ENCODE measurements at regions of chr12 and their contacts with region 1.

Region 1: GRCh38 chr12:49358483-49359141 is 8.7 kb upstream of the SPATS2 start:
- DNase-seq: peak; percentile 45
- H3K4me3 Mint-ChIP-seq: no peak overlapping the region
- H3K27ac Mint-ChIP-seq: no peak overlapping the region
- H3K4me1 Mint-ChIP-seq: peaks cover 22% of the 10 kb centered on the region
- H3K27me3 Mint-ChIP-seq: no peaks in the 10 kb centered on the region
- CTCF ChIP-seq: peak; percentile 64

Region 2: GRCh38 chr12:49233842-49234535 is 124.6 kb before region 1 on chr12:
- CTCF ChIA-PET with region 1: no interaction called
- intact Hi-C with region 1: no loop called
- DNase-seq: no peak
- H3K4me3 Mint-ChIP-seq: peak overlapping the region; percentile 65
- H3K27ac Mint-ChIP-seq: no peak overlapping the region
- H3K4me1 Mint-ChIP-seq: no peaks in the 10 kb centered on the region
- H3K27me3 Mint-ChIP-seq: no peaks in the 10 kb centered on the region
- CTCF ChIP-seq: no peak

Region 3: DNA sequence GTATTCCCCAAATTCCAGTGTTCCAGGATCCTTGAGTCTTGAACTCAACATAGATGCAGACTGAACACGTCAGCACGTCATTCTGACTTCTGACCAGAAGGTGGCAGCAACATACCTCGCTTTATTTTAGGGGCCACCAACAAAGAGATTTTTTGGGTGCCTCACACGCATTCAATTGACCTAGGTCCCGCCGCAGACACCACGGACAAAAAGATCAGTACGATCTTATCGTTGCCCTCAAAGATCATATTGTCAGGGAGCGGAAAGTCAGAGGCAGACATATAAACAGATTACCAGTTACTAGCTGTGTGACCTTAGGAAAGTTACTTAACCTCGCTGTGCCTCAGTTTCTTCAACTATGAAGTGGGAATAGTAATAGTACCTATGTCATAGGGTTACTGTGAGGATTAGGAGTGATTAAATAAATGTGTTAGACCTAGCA is 70.2 kb before region 1 on chr12:
- CTCF ChIA-PET with region 1: interaction called, 3 read pairs
- intact Hi-C with region 1: loop called (anchors 1 kb)
- DNase-seq: peak; percentile 53
- H3K4me3 Mint-ChIP-seq: no peak overlapping the region
- H3K27ac Mint-ChIP-seq: no peak overlapping the region
- H3K4me1 Mint-ChIP-seq: no peaks in the 10 kb centered on the region
- H3K27me3 Mint-ChIP-seq: peaks cover 59% of the 10 kb centered on the region
- CTCF ChIP-seq: peak; percentile 47

Region 4: DNA sequence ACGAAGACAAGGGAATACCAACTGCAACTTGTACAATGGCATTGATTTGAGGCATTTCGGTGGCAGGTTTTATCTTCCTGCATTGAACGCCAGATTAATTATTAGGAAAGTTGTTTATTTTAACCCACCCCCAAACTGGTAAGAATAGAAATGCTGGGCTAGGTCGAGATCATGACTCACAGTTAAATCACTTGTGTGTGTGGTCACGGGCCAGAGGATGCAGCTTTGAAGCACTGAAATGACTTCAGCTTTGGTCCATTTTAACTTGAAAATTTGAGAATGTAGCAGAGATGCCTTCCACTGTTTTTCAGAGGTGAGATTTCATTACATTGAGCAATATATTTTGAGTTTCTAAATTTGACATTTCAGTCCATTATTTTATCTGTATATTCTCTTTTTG is 156.7 kb after region 1 on chr12:
- CTCF ChIA-PET with region 1: interaction called, 67 read pairs
- intact Hi-C with region 1: loop called (anchors 1 kb)
- DNase-seq: peak; percentile 42
- H3K4me3 Mint-ChIP-seq: peak overlapping the region; percentile 41
- H3K27ac Mint-ChIP-seq: no peak overlapping the region
- H3K4me1 Mint-ChIP-seq: peaks cover 21% of the 10 kb centered on the region
- H3K27me3 Mint-ChIP-seq: no peaks in the 10 kb centered on the region
- CTCF ChIP-seq: no peak

Region 5: DNA sequence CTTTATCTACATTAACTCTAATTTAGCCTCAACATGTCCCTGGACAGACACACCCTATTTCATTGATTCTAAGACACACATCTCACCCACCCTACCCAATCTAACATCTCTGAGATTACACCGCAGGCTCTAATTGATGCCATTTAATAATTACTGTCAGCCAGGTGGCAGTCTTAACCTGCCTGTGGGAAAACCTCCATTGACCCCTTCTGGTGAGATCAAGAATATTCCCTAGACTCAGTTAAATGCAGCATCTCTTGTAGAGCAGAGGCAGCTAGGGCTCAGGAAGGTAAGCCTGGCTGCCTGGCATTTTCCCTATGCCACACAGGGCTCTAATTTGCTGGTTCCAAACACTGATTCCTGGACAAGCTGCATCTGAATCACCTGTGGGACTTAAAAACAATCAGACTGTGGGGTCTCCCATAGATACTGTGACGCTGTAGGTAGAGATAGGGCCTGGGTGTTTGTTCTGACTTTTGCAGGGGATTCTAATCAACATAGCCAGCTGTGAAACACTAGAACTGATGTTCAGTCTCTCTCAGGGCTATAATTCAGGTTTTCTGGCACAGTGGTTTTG is 195.0 kb after region 1 on chr12:
- CTCF ChIA-PET with region 1: interaction called, 21 read pairs
- intact Hi-C with region 1: loop called (anchors 1 kb)
- DNase-seq: peak; percentile 25
- H3K4me3 Mint-ChIP-seq: no peak overlapping the region
- H3K27ac Mint-ChIP-seq: no peak overlapping the region
- H3K4me1 Mint-ChIP-seq: no peaks in the 10 kb centered on the region
- H3K27me3 Mint-ChIP-seq: peaks cover 26% of the 10 kb centered on the region
- CTCF ChIP-seq: peak; percentile 60

Region 6: GRCh38 chr12:49776413-49776812 is 417.8 kb after region 1 on chr12:
- CTCF ChIA-PET with region 1: no interaction called
- intact Hi-C with region 1: no loop called
- DNase-seq: peak; percentile 69
- H3K4me3 Mint-ChIP-seq: no peak overlapping the region
- H3K27ac Mint-ChIP-seq: no peak overlapping the region
- H3K4me1 Mint-ChIP-seq: peaks cover 11% of the 10 kb centered on the region
- H3K27me3 Mint-ChIP-seq: peaks cover 29% of the 10 kb centered on the region
- CTCF ChIP-seq: peak; percentile 58

Region 7: GRCh38 chr12:49789992-49790391 is 431.4 kb after region 1 on chr12:
- CTCF ChIA-PET with region 1: no interaction called
- intact Hi-C with region 1: no loop called
- DNase-seq: no peak
- H3K4me3 Mint-ChIP-seq: no peak overlapping the region
- H3K27ac Mint-ChIP-seq: no peak overlapping the region
- H3K4me1 Mint-ChIP-seq: no peaks in the 10 kb centered on the region
- H3K27me3 Mint-ChIP-seq: no peaks in the 10 kb centered on the region
- CTCF ChIP-seq: no peak